Activated CD4-positive, alpha-beta T cell treated with anti-CD3 and anti-CD28 coated beads for 36 hours (primary cell): ENCODE measurements at regions of chr20 and their contacts with region 1.

Region 1: GRCh38 chr20:59032023-59032712 is at the start of gene ATP5F1E:
- DNase-seq: peak; percentile 98
- ATAC-seq: peak; percentile 95
- H3K4me3 Mint-ChIP-seq: peak within 1 kb of the TSS; percentile 87
- H3K27ac Mint-ChIP-seq: peak within 1 kb of the TSS; percentile 96
- H3K4me1 Mint-ChIP-seq: peaks cover 73% of the 10 kb centered on the region
- H3K27me3 Mint-ChIP-seq: no peaks in the 10 kb centered on the region
- total RNA-seq, gene ATP5F1E: 63.5 to 76.1 TPM

Region 2: DNA sequence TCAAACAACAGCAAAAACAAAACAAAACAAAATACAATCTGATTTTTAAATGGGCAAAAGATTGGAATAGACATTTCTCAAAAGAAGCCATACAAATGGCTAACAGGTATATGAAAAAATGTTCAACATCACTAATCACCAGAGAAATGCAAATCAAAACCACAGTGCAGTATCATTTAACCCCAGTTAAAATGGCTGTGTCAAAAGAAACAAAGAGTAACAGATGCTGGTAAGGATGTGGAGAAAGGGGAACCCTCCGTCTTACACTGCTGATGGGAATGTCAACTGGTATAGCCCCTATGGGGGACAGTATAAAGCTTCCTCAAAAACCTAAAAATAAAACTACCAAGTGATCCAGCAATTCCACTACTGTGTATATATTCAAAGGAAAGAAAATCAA is 62.0 kb before region 1 on chr20:
- CTCF ChIA-PET with region 1: no interaction called
- POLR2A ChIA-PET with region 1: no interaction called
- intact Hi-C with region 1: no loop called
- DNase-seq: no peak
- ATAC-seq: no peak
- H3K4me3 Mint-ChIP-seq: no peak overlapping the region
- H3K27ac Mint-ChIP-seq: no peak overlapping the region
- H3K4me1 Mint-ChIP-seq: no peaks in the 10 kb centered on the region
- H3K27me3 Mint-ChIP-seq: no peaks in the 10 kb centered on the region

Region 3: DNA sequence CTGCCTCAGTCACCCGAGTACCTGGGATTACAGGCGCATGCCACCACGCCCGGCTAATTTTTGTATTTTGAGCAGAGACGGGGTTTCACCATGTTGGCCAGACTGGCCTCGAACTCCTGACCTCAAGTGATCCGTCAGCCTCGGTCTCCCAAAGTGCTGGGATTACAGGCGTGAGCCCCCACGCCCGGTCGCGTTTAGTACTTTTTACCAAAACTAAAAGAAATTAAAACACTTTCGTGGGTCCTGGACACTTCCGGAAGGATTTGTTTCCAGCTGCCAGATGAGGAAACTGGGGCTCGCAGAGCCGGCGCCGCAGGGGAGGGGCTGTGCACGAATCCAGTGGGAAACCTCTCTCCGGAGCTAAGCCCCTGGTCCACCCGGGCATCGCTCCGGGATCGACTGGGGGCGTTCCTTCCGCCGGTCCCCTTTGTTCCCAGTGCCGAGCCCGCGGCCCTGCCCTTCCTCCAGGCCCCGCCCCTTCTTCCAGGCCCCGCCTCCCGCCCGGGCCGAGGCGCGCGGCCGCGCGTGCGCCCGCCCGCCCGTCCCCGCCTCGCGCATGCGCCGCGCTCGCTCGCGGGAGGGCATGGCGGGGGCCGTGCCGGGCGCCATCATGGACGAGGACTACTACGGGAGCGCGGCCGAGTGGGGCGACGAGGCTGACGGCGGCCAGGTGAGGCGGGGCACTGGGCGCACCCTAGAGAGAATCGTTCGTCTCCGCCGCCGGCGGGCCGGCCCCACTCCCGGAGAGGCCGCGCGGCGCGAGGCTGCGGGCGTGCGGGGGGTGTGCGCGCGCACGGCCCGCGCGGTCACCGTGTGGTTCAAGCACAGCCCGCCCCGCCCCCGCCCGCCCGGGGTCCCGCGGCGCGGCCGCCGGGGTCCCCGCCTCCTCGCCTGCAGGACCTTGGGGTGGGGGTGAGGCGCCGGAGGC is 51.2 kb before region 1 on chr20 and contains the start of gene NELFCD:
- CTCF ChIA-PET with region 1: no interaction called
- POLR2A ChIA-PET with region 1: interaction called, 6 read pairs
- intact Hi-C with region 1: loop called (anchors 1 to 5 kb)
- DNase-seq: peak; percentile 94
- ATAC-seq: peak; percentile 87
- H3K4me3 Mint-ChIP-seq: peak within 1 kb of the TSS; percentile 85
- H3K27ac Mint-ChIP-seq: peak within 1 kb of the TSS; percentile 89
- H3K4me1 Mint-ChIP-seq: peaks cover 32% of the 10 kb centered on the region
- H3K27me3 Mint-ChIP-seq: no peaks in the 10 kb centered on the region
- total RNA-seq, gene NELFCD: 111 to 121 TPM

Region 4: GRCh38 chr20:59042796-59043660 is 10.9 kb after region 1 on chr20:
- CTCF ChIA-PET with region 1: interaction called, 6 read pairs
- POLR2A ChIA-PET with region 1: interaction called, 16 read pairs
- intact Hi-C with region 1: loop called (anchors 1 kb)
- DNase-seq: peak; percentile 97
- ATAC-seq: peak; percentile 97
- H3K4me3 Mint-ChIP-seq: peak overlapping the region; percentile 90
- H3K27ac Mint-ChIP-seq: peak overlapping the region; percentile 89
- H3K4me1 Mint-ChIP-seq: peaks cover 48% of the 10 kb centered on the region
- H3K27me3 Mint-ChIP-seq: no peaks in the 10 kb centered on the region

Region 5: DNA sequence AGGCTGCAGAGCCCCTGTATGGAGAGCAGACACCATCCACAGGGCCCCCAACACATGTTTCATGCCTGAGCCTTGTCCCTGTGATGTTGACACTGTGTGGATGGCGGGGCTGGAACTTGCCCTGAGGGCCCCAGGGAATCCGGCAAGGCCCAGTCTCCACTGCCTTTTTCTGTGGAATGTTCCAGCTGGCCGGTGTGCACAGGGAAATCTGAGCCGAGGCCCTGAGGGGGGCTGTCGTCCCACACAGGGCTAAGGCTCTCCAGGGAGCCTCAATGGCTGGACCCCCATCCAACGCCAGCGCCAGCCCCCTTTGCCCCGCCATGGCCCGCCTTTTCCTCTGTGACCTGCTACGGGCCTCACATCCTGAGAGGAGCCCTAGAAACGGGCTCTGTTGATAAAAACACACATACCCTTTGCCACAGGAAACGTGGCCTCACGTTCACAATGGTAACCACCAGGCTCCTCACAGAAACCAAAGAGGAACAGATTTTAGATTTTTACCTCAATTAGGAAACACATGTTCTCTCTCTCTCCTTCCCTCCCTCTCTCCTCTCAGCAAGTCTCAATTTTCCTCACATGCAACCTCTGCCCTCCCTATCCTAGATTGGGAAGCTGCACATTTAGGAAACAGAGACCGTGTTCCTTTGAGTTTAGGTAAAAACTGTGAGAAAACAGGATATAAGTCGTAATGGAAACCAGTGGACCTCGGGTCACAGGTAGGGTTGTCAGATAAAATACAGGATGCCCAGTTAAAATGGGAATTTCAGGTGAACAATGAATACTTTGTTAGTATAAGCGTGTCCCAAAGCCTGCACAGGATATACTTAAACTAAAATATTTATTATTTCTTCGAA is 117.7 kb after region 1 on chr20:
- CTCF ChIA-PET with region 1: no interaction called
- POLR2A ChIA-PET with region 1: no interaction called
- intact Hi-C with region 1: loop called in 1 of 2 experiments (anchors 5 kb)
- DNase-seq: peak; percentile 82
- ATAC-seq: peak; percentile 42
- H3K4me3 Mint-ChIP-seq: peak overlapping the region; percentile 58
- H3K27ac Mint-ChIP-seq: peak overlapping the region; percentile 95
- H3K4me1 Mint-ChIP-seq: peaks cover 96% of the 10 kb centered on the region
- H3K27me3 Mint-ChIP-seq: no peaks in the 10 kb centered on the region

Region 6: DNA sequence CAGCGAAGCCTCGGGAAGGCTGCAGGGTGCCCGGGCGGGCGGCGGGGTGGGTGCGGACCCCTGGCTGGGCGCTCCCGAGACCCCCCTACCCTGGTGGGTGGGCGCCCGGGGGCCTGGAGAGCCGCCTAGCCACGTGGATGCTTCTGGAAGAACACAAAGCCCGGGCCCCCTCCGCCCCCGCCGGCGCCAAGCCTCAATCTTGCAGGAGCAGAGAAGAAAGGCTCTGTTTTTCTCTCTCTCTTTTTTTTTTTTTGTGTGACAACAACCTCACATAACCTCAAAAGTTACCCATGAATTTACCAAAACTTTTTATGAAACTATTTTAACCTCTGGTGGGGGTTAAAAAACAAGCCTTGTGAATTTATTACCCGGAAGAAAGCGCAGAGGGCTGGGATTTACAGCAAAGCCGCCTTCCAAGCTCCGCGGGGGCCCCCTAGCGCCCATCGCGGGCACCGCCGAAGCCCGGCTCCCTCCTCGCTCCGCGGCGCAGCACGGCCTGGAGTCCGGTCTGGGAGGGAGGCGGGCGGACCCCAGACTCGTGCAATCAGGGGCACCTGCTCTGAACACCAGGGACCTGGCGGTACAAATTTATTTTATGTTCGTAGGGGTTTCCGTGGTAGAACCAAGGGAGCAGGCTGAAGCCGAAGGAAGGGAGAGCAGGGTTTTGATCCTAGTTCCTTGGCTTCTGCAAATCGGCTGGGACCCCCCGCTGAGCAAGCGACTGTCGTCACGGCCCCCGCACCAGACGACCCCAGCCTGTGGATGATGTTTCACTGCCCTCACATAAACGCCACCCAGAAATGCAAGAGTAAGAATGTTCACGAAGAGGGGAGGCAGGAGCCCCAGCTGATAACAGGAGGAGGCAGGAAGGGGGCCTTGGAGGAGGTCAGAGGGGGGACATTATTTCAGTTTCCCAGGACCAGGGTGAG is 190.3 kb after region 1 on chr20:
- CTCF ChIA-PET with region 1: interaction called, 4 read pairs
- POLR2A ChIA-PET with region 1: interaction called, 4 read pairs
- intact Hi-C with region 1: loop called in 1 of 2 experiments (anchors 1 kb)
- DNase-seq: peak; percentile 91
- ATAC-seq: peak; percentile 95
- H3K4me3 Mint-ChIP-seq: peak overlapping the region; percentile 65
- H3K27ac Mint-ChIP-seq: peak overlapping the region; percentile 81
- H3K4me1 Mint-ChIP-seq: peaks cover 31% of the 10 kb centered on the region
- H3K27me3 Mint-ChIP-seq: no peaks in the 10 kb centered on the region

Region 7: GRCh38 chr20:59661661-59662060 is 629.5 kb after region 1 on chr20:
- CTCF ChIA-PET with region 1: no interaction called
- POLR2A ChIA-PET with region 1: no interaction called
- intact Hi-C with region 1: no loop called
- DNase-seq: no peak
- ATAC-seq: no peak
- H3K4me3 Mint-ChIP-seq: no peak overlapping the region
- H3K27ac Mint-ChIP-seq: no peak overlapping the region
- H3K4me1 Mint-ChIP-seq: no peaks in the 10 kb centered on the region
- H3K27me3 Mint-ChIP-seq: peaks cover 14% of the 10 kb centered on the region